Activated naive CD4-positive, alpha-beta T cell treated with anti-CD3 and anti-CD28 coated beads for 36 hours (primary cell): ENCODE measurements at regions of chr20 and their contacts with region 1.

Region 1: DNA sequence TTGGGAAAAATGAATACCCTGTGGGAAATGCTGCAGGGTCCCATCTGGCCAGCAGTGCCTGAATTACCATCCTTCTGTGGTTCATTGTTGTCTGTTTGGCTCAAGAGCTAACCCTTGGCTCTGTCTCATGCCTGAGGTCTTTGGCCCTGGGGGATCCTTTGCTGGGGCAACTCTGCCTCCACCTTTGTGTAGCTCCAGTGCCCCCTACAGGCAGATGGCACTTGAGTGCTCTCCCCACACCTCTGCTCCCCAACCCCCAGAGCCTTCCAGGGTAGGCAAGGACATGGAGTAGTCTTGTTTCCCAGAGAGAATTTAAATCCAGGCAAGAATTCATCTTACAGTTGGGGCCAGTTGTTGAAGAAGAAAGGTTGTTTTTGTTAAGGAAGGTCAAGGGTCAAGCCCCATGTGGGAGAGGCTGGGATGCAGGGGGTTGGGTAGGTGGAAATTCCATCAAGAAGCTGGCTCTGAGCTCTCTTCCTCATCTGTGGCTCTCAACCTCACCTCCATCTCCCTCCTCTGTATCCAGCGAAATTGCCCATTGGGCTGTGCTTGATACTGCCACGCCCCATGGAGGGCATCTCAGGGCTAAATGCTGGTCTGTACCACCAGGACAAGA is 44.2 kb downstream of the ZNF831 start:
- DNase-seq: peak; percentile 91
- H3K4me3 Mint-ChIP-seq: no peak overlapping the region
- H3K27ac Mint-ChIP-seq: peak overlapping the region; percentile 32
- H3K4me1 Mint-ChIP-seq: peaks cover 30% of the 10 kb centered on the region
- H3K27me3 Mint-ChIP-seq: no peaks in the 10 kb centered on the region

Region 2: DNA sequence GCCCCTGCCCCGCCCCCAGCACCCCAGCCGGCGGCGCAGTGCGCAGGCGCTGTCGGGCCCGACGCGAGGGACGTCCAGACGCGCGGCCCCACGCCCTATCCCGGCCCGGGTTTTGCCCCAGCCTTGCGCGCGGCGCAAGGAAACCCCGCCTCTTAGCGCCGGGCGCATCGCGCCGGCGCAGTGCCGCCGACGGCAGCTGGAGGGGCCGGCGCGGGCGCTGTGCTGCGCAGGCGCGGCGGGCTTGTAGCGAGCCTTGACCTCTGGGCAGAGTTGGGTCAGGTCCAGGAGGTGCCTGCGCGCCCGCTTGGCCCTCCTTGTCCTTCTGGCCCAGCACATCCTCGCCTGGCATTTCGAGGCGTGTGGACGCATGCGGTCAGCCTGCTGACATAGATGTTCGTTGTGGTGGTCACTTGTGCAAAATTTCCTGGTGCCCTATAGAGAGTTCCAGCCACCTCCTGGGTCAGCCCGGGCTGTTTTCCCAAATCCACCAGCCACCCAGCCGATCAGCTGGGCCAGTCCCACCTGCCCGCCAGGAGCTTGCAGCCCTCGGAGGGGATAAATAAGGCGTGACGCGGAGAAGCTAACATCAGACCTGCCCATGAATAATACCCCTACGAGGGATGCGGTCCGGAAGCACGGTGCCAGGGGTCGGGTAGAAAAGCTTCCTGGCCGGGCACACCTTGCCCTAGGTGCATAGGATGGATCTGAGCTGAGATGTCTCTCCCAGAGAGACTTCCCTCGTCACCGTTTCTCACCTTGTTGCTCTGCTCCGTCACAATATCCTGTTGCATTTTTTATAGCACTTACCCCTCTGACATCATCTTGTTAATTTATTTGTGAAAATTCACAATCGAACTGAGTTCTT is 164.8 kb before region 1 on chr20:
- CTCF ChIA-PET with region 1: interaction called, 10 read pairs
- intact Hi-C with region 1: no loop called
- DNase-seq: peak; percentile 92
- H3K4me3 Mint-ChIP-seq: peak overlapping the region; percentile 93
- H3K27ac Mint-ChIP-seq: peak overlapping the region; percentile 84
- H3K4me1 Mint-ChIP-seq: peaks cover 40% of the 10 kb centered on the region
- H3K27me3 Mint-ChIP-seq: no peaks in the 10 kb centered on the region

Region 3: DNA sequence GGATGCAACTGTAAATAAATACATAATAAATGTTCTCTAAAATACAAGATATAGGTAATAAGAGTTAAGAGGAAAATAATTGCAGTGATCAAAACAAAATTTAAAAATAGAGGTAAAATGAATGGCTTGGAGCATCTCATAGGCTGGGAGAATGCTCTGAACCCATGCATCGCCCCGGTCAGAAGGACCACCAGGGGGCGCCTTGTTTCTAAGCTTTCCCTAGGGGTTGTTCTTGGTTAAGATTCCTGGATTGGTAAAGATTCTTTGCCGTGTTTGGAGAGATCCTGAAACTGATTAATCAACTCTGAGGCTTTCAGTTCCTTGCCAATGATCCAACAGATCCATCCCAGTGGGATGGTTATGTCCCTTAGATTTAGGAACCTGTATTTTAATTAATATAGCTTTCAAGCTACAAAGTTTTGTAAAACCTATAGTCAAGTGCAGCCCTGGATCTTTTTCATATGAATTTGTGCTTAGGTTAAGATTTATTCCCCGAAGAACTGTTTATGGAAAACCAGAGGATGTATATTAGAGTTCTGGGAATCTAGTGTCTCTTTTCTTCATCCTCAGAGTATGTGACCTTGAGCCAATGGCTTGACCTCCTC is 119.9 kb before region 1 on chr20:
- CTCF ChIA-PET with region 1: interaction called, 122 read pairs
- intact Hi-C with region 1: loop called (anchors 1 kb)
- DNase-seq: peak; percentile 94
- H3K4me3 Mint-ChIP-seq: no peak overlapping the region
- H3K27ac Mint-ChIP-seq: no peak overlapping the region
- H3K4me1 Mint-ChIP-seq: peaks cover 2% of the 10 kb centered on the region
- H3K27me3 Mint-ChIP-seq: no peaks in the 10 kb centered on the region

Region 4: DNA sequence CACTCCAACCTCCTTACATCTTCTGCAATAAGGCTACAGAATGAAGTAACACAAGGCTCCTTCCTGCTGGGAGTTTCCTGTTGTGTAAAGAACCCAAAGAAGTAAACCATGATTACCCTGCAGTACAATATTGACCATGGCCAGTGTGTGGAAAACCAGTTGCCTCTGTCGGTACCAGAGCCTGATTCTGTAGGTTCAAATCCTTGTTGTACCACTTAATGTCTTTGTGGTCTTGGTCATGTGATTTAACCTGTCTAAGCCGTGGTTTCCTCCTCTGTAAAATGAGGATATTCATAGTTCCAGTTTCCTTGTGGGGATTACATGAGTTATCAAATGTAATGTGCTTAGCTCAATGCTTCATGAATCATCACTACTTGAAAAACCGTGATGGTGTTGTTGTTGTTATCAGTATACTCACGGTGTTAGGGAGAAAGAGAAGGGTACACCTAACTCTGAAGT is 105.0 kb before region 1 on chr20:
- CTCF ChIA-PET with region 1: interaction called, 15 read pairs
- intact Hi-C with region 1: no loop called
- DNase-seq: no peak
- H3K4me3 Mint-ChIP-seq: no peak overlapping the region
- H3K27ac Mint-ChIP-seq: peak overlapping the region; percentile 6
- H3K4me1 Mint-ChIP-seq: peaks cover 17% of the 10 kb centered on the region
- H3K27me3 Mint-ChIP-seq: no peaks in the 10 kb centered on the region

Region 5: GRCh38 chr20:59165891-59166709 is 41.8 kb before region 1 on chr20:
- CTCF ChIA-PET with region 1: interaction called, 7 read pairs
- intact Hi-C with region 1: loop called (anchors 2 kb)
- DNase-seq: peak; percentile 49
- H3K4me3 Mint-ChIP-seq: peak overlapping the region; percentile 78
- H3K27ac Mint-ChIP-seq: peak overlapping the region; percentile 94
- H3K4me1 Mint-ChIP-seq: peaks cover 81% of the 10 kb centered on the region
- H3K27me3 Mint-ChIP-seq: no peaks in the 10 kb centered on the region

Region 6: DNA sequence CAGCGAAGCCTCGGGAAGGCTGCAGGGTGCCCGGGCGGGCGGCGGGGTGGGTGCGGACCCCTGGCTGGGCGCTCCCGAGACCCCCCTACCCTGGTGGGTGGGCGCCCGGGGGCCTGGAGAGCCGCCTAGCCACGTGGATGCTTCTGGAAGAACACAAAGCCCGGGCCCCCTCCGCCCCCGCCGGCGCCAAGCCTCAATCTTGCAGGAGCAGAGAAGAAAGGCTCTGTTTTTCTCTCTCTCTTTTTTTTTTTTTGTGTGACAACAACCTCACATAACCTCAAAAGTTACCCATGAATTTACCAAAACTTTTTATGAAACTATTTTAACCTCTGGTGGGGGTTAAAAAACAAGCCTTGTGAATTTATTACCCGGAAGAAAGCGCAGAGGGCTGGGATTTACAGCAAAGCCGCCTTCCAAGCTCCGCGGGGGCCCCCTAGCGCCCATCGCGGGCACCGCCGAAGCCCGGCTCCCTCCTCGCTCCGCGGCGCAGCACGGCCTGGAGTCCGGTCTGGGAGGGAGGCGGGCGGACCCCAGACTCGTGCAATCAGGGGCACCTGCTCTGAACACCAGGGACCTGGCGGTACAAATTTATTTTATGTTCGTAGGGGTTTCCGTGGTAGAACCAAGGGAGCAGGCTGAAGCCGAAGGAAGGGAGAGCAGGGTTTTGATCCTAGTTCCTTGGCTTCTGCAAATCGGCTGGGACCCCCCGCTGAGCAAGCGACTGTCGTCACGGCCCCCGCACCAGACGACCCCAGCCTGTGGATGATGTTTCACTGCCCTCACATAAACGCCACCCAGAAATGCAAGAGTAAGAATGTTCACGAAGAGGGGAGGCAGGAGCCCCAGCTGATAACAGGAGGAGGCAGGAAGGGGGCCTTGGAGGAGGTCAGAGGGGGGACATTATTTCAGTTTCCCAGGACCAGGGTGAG is 14.7 kb after region 1 on chr20:
- CTCF ChIA-PET with region 1: interaction called, 35 read pairs
- intact Hi-C with region 1: no loop called
- DNase-seq: peak; percentile 86
- H3K4me3 Mint-ChIP-seq: peak overlapping the region; percentile 69
- H3K27ac Mint-ChIP-seq: peak overlapping the region; percentile 37
- H3K4me1 Mint-ChIP-seq: peaks cover 21% of the 10 kb centered on the region
- H3K27me3 Mint-ChIP-seq: no peaks in the 10 kb centered on the region

Region 7: GRCh38 chr20:59232618-59233017 is 24.8 kb after region 1 on chr20:
- CTCF ChIA-PET with region 1: no interaction called
- intact Hi-C with region 1: no loop called
- DNase-seq: no peak
- H3K4me3 Mint-ChIP-seq: no peak overlapping the region
- H3K27ac Mint-ChIP-seq: no peak overlapping the region
- H3K4me1 Mint-ChIP-seq: peaks cover 6% of the 10 kb centered on the region
- H3K27me3 Mint-ChIP-seq: no peaks in the 10 kb centered on the region